ENCODE measurements at regions of chr14 and their contacts with region 1.

Region 1: GRCh38 chr14:22929104-22929847 is at the start of gene PRMT5:
- DNase-seq: peak; percentile 94 to 99 (median 96)
- ATAC-seq: peak; percentile 96
- H3K4me3 ChIP-seq: peak within 1 kb of the TSS; percentile 80
- H3K27ac ChIP-seq: peak within 1 kb of the TSS; percentile 88
- H3K4me1 ChIP-seq: peaks cover 5 to 14% of the 10 kb centered on the region in 2 experiments; a peak in 3 of 5 replicates
- H3K27me3 ChIP-seq: no peaks in the 10 kb centered on the region
- CTCF ChIP-seq: peak in 1 of 3 experiments; percentile 26; a peak in 2 of 6 replicates
- EP300 ChIP-seq: peak; percentile 77
- POLR2A ChIP-seq: peak; percentile 99
- RAD21 ChIP-seq: no peak
- polyA plus RNA-seq, gene PRMT5: 114 to 155 TPM

Region 2: DNA sequence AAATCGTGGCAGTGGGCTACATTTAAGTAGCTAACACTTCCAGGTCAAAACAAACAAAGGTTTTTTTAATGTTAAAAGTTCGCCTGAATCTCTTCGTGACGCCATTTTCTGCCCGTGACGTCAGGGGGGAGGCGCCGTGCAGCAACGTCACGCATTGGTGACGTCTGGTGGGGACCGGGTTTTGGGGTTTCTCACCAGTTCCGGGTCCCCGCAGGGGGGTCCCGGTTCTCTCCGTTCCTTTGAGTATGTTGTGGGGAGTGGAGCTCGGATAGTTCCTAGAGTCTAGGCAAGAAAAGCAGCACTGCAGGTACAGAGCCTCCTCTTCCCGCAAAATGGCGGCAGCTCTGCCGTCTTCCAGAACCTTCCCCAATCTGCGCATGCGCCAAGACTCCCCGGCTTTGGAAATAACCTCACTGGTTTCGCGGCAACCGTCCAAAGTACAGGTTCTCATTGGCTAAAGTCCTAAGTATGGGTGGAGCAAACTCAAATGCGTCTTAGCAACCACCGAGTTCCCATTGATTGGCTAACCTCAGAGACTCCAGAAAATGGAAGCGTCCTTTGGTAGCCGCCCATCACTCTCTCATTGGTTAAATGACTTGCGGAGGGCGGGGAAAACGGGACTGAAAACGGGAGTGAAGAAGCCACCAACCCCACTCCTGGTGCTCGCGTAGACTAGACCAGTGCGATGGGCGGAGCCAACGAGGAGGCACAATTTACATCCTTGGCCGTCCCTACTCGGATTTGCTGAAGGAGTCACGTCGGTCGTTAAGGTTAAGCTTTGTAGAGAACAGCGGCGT is 10.3 kb before region 1 on chr14 and contains the start of gene RBM23:
- CTCF ChIA-PET with region 1: no interaction called
- POLR2A ChIA-PET with region 1: interaction called, 62 read pairs
- in situ Hi-C with region 1: no loop called
- intact Hi-C with region 1: no loop called
- DNase-seq: peak; percentile 95 to 100 (median 97)
- ATAC-seq: peak; percentile 96
- H3K4me3 ChIP-seq: peak within 1 kb of the TSS; percentile 68
- H3K27ac ChIP-seq: peak within 1 kb of the TSS; percentile 94
- H3K4me1 ChIP-seq: peaks cover 0 to 25% of the 10 kb centered on the region in 2 experiments; a peak in 4 of 5 replicates
- H3K27me3 ChIP-seq: no peaks in the 10 kb centered on the region
- CTCF ChIP-seq: peak in 1 of 3 experiments; percentile 8; a peak in 1 of 6 replicates
- EP300 ChIP-seq: no peak
- POLR2A ChIP-seq: peak; percentile 92
- RAD21 ChIP-seq: no peak
- polyA plus RNA-seq, gene RBM23: 67.8 to 102 TPM

Measured in K562 (cell line).